ENCODE measurements at regions of chr10 and their contacts with region 1.

Region 1: DNA sequence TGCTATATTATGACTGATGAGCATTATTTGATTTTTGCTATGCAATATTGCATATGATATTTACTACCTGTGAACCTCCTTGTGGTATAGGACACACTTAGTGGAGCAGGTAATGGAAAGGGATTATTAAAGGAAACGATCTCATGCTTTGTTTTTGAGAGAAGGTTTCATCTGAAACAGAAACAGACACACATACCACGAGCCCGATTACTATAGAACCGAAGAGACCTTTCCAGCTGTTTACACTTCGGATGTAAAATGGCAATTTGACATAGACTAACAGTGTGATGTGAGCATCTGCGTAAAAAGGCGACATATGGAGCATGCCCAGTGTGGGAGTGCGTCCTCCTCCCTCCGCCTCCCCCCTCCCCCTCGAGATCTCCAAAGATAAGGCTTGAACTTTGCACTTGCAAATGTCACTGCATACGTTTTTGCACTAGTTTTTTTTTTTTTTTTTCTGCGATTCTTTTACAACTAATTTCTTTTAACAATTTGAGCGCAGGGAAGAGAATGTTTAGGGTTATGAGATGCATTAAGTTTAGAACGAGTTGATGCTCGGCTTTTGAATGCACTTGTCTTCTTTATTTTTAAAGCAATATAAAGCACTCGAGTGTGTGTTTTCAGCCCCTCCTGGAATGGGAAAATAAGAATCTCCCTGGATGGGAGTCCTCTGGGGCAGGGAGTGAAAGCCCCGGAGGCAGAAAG is 251.0 kb downstream of the NSUN6 start:
- DNase-seq: peak; percentile 28 to 79 (median 65)
- H3K4me3 ChIP-seq: peak overlapping the region; percentile 21 to 73 (median 58)
- H3K27ac ChIP-seq: peak overlapping the region in 57 of 59 donors; percentile 15 to 91 (median 79)
- H3K27me3 ChIP-seq: peaks cover 0 to 6% (median 0%) of the 10 kb centered on the region in 45 donors
- CTCF ChIP-seq: no peak

Region 2: GRCh38 chr10:18260310-18260922 is 139.9 kb before region 1 on chr10:
- intact Hi-C with region 1: loop called in 1 of 2 experiments (anchors 2 kb)
- DNase-seq: peak in 6 of 10 donors; percentile 11 to 44 (median 40)
- H3K4me3 ChIP-seq: peak overlapping the region in 56 of 59 donors; percentile 11 to 62 (median 46)
- H3K27ac ChIP-seq: peak overlapping the region in 40 of 59 donors; percentile 1 to 81 (median 64)
- H3K27me3 ChIP-seq: peaks cover 0 to 4% (median 0%) of the 10 kb centered on the region in 45 donors
- CTCF ChIP-seq: no peak

Measured in dorsolateral prefrontal cortex (tissue), 120 donors.